ENCODE measurements at regions of chr6 and their contacts with region 1.

Region 1: GRCh38 chr6:45265246-45265645 is 62.9 kb upstream of the RUNX2 start:
- DNase-seq: no peak
- ATAC-seq: no peak
- H3K4me3 ChIP-seq: no peak overlapping the region
- H3K27ac ChIP-seq: no peak overlapping the region
- H3K4me1 ChIP-seq: no peaks in the 10 kb centered on the region
- H3K27me3 ChIP-seq: no peaks in the 10 kb centered on the region
- CTCF ChIP-seq: no peak

Region 2: DNA sequence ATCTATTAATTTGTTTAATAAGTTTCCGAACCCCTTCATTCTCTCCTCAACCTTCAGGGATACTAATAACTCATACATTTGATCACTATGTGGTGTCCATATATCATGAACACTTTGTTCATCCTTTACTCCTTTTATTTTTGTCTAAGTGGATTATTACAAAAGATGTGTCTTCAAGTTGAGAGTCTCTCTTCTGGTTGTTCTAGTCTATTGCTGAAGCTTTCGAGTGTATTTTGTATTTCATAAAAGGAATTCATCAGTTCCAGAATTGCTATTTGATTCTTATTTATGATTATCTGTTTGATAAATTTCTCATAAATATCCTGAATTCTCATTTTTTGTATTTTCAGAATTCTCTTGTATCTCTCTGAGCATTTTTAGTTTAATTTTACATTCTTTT is 33.6 kb before region 1 on chr6:
- intact Hi-C with region 1: loop called in 1 of 10 experiments (anchors 2 kb)
- DNase-seq: no peak
- ATAC-seq: no peak
- H3K4me3 ChIP-seq: no peak overlapping the region
- H3K27ac ChIP-seq: no peak overlapping the region
- H3K4me1 ChIP-seq: no peaks in the 10 kb centered on the region
- H3K27me3 ChIP-seq: no peaks in the 10 kb centered on the region
- CTCF ChIP-seq: no peak

Measured in heart right ventricle (tissue), 16 donors.